ENCODE measurements at regions of chr2 and their contacts with region 1.

Region 1: DNA sequence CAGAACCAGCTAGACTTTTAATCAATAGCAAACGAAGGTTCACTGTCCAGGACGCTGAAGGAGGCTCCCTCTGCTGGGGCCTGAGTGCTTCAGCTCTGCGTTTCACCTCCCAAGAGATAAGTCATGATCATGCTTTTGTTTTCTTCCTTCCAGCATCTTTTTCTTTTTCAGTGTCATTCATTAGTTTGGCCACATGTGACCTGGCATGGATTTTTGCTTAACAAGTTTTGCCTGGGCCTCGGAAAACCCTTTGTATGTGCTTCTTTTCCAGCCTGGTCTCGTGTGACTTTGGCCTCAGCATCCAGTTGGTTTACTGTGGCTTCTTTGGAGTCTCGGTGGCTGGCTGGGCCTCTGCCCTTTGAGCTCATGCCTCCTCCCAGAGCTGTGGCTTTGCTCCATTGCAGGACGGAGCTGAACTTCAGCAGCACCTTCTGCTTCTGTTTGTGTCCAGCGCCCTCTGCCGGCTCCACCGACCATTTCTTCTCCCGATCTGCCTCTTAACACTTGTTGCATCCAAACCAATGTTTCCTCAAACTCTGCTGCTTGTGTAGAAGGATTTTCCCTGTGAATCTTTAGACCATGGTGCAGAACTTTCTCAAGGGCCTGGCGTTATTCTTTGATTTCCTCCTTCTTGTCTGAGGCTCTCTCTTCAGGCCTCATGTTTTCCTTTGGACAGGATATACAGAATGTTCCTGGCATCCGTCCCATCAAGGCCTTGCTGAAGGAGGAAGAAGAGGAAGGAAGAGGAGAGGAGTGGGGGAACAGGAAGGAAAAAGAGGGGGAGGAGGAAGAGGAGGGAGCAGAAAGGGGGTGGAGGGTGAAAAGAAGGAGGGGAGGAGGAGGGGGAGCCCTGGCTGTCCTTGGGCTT is 23.6 kb upstream of the HES6 start:
- DNase-seq: peak; percentile 73 to 87
- ATAC-seq: peak; percentile 62 to 77
- H3K4me3 ChIP-seq: no peak overlapping the region
- H3K27ac ChIP-seq: peak overlapping the region; percentile 13 to 67; a peak in 2 of 6 replicates
- H3K4me1 ChIP-seq: peaks cover 24% of the 10 kb centered on the region
- CTCF ChIP-seq: peak; percentile 74
- EP300 ChIP-seq: no peak
- POLR2A ChIP-seq: no peak
- RAD21 ChIP-seq: peak; percentile 69 to 71

Region 2: DNA sequence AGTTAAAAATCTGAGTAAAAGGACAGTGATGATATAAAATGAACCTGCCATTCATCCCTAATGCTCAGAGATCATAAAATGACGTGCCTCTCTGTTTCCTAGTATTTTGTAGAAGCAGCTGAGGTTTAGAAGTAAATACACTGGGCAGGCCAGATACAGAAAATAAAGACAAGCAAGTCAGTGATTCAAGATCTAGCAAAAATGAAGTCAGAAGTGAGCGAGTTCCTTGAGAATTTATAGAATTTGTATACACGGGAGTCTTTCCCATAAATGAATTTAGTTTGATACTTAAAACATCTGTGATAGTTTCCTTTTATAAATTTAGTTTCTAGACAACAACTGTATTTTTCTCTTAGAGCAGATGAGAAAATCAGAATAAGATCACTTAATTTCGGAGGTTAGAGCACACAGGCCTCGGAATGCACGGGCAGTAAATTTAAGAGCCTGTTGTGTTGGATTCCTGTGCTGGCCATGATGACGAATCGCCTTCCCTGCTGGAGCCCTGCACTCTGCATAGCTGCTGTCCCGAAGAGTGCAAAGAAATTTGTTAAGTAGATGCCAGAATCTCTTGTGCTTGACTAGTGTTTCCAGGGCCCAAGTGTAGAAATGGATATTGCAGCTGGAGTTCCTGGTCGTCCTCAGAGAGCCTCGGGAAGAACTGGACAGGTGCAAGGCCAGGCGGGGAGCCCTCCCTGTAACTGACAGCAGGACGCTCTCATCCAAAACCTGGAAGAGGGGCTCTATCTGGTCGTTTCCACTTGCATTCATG is 548.6 kb before region 1 on chr2:
- CTCF ChIA-PET with region 1: no interaction called
- POLR2A ChIA-PET with region 1: no interaction called
- DNase-seq: no peak
- ATAC-seq: no peak
- H3K4me3 ChIP-seq: no peak overlapping the region
- H3K27ac ChIP-seq: no peak overlapping the region
- H3K4me1 ChIP-seq: peaks cover 10% of the 10 kb centered on the region; the same call in 1 of the 3 replicates
- CTCF ChIP-seq: no peak
- EP300 ChIP-seq: no peak
- POLR2A ChIP-seq: no peak
- RAD21 ChIP-seq: no peak

Region 3: DNA sequence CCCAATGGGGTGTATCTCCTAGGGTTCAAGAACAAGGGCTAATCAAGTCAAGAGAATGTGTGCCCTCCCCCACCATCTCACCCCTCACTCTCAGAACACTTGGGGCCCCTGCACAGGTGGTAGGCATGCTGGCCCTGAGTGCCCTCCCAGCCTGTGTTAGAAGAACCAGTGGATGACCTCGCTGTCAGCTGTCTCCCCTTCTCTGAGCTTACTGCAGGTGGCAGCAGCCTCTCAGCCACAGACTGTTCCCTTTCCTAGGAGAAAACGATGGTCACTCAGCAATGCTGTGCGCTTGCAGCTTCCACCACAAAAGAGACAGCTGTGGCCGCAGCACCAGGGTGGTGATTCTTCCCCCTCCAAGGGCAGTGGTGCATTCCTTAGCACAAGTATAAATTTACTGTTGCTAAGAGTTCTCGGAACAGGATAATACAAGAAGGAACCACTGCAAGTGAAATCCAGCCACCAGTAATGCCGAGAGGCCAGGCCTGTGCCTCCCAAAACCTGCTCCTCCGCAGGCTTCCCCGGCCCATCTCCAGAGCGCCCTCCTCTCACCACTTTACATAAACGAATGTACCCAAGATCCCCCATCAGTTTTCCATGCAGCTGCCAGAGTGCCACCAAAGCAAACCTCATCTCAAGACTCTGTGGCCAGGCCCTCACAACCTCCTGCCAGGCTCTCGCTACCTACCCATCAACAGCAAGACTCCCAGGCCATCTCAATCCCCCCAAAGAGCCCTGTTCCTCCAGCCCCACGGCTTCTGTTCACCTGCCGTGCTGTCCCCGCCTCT is 404.9 kb before region 1 on chr2:
- CTCF ChIA-PET with region 1: interaction called, 11 read pairs
- POLR2A ChIA-PET with region 1: no interaction called
- DNase-seq: peak; percentile 55 to 72
- ATAC-seq: peak; percentile 93 to 95
- H3K4me3 ChIP-seq: no peak overlapping the region
- H3K27ac ChIP-seq: no peak overlapping the region
- H3K4me1 ChIP-seq: peaks cover 28% of the 10 kb centered on the region
- CTCF ChIP-seq: peak; percentile 80
- EP300 ChIP-seq: no peak
- POLR2A ChIP-seq: no peak
- RAD21 ChIP-seq: peak; percentile 90 to 95

Region 4: DNA sequence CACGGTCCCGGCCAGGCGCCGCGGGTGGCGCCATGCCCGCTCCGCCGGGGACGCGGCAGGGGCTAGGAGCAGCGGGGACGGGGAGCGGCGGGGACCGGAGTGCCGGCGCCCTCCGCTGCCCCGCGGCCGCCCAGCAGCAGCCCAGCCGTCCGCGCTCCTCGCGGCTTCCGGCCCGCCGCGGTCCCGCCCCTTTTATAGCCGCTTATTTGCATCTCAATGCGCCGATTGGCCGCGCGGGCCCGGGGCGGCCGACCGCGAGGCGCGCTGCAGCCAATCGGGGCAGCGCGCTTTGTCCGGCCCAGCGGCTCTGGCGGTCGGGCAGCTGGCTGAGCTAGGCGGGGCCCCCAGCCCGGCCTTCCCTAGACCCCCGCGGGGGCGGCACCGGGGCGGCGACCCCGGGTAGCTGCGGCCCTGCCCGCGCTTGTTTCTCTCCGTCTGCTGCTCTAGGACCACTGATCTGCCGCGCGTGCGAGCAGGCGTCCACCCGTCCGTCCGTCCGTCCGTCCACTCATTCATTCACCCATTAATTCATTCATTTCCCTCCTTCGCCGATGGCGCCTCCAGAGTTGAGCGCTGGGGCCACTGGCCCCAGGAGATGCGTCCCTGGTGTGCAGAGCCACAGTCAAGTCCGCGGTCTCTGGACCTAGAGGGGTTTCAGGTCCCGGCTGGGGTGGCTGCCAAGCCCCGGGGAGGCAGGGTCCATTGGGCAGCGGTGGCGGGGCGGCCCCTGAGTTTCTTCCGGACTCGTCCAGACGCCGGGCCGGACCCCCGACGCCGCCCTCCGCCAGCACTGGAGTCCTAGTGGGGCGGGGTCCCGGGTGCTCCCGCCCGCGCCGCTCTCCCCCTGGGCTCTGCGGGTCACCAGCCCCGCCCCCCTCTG is 23.3 kb before region 1 on chr2 and contains the start of gene HES6:
- CTCF ChIA-PET with region 1: interaction called, 14 read pairs
- POLR2A ChIA-PET with region 1: interaction called, 5 read pairs
- DNase-seq: peak; percentile 83 to 88
- ATAC-seq: peak; percentile 80 to 90
- H3K4me3 ChIP-seq: peak within 1 kb of the TSS; percentile 81
- H3K27ac ChIP-seq: peak within 1 kb of the TSS; percentile 77 to 90
- H3K4me1 ChIP-seq: peaks cover 9% of the 10 kb centered on the region; the same call in 1 of the 3 replicates
- CTCF ChIP-seq: no peak
- EP300 ChIP-seq: no peak
- POLR2A ChIP-seq: peak; percentile 99
- RAD21 ChIP-seq: no peak
- polyA plus RNA-seq, gene HES6: 5.2 and 5.4 TPM in 2 replicates

Region 5: DNA sequence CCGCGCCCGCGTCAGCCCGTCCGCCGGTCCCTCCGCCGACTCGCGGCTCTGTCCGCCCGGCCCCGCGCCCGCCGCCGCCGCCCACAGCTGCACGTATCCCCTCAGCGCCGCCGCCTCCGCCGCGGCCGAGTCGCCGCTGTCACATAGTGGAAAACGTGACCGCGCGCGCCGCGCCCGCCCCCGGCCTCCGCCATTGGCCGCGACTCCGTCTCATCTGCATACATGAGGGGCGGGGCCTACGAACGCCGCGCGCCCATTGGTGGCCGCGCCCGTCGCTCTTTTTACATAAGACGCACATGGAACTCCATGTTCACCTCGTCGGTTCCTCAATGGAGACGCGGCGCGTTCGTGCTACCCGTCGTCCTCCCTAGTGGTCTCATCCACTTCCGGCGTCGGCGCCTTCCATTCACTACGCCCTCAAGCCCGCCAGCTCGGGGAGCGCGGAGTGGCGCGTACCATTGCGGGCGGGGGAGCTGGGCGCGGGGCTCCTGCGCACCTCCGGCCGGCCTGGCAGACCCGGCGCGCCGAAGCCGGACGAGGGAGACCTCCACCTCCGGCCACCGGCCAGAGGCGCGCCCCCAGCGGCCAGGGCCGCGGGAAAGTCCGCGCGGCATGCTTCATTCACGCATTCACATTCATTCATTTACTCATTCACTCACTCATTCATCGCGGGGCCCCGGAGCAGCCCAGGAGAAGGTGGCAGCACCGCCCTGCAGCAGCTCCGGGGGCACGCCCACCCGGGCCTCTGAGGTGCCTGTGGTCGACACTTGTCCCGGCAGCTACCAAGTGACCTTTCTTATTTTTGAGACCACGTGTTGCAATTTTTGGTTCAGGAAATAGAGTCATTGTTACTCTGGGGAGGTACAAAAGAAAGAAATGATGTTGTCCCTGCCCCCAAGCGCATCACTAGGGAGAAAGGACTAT is 25.5 kb after region 1 on chr2:
- CTCF ChIA-PET with region 1: interaction called, 351 read pairs
- POLR2A ChIA-PET with region 1: no interaction called
- DNase-seq: peak; percentile 76 to 99
- ATAC-seq: peak; percentile 58 to 62
- H3K4me3 ChIP-seq: peak overlapping the region; percentile 67
- H3K27ac ChIP-seq: peak overlapping the region; percentile 90 to 95
- H3K4me1 ChIP-seq: peaks cover 69% of the 10 kb centered on the region
- CTCF ChIP-seq: peak; percentile 37; the same call in 2 of the 3 replicates
- EP300 ChIP-seq: no peak
- POLR2A ChIP-seq: peak; percentile 58; the same call in 1 of the 2 replicates
- RAD21 ChIP-seq: no peak; a peak in 1 of 5 replicates

Region 6: GRCh38 chr2:238339395-238340213 is 76.2 kb after region 1 on chr2:
- CTCF ChIA-PET with region 1: interaction called, 27 read pairs
- POLR2A ChIA-PET with region 1: no interaction called
- DNase-seq: peak; percentile 29 to 49
- ATAC-seq: peak; percentile 86 to 87
- H3K4me3 ChIP-seq: no peak overlapping the region
- H3K27ac ChIP-seq: peak overlapping the region in 1 of 2 experiments; percentile 47; a peak in 3 of 6 replicates
- H3K4me1 ChIP-seq: peaks cover 6% of the 10 kb centered on the region; the same call in 2 of the 3 replicates
- CTCF ChIP-seq: peak; percentile 46; the same call in 1 of the 3 replicates
- EP300 ChIP-seq: no peak
- POLR2A ChIP-seq: no peak
- RAD21 ChIP-seq: peak; percentile 61 to 71

Region 7: GRCh38 chr2:238426568-238427434 is 163.4 kb after region 1 on chr2 and contains the start of gene ASB1:
- CTCF ChIA-PET with region 1: no interaction called
- POLR2A ChIA-PET with region 1: no interaction called
- DNase-seq: peak; percentile 62 to 76
- ATAC-seq: peak; percentile 85 to 88
- H3K4me3 ChIP-seq: peak within 1 kb of the TSS; percentile 85
- H3K27ac ChIP-seq: peak within 1 kb of the TSS; percentile 94 to 99
- H3K4me1 ChIP-seq: peaks cover 21% of the 10 kb centered on the region; the same call in 2 of the 3 replicates
- CTCF ChIP-seq: no peak
- EP300 ChIP-seq: no peak
- POLR2A ChIP-seq: peak; percentile 46
- RAD21 ChIP-seq: no peak
- polyA plus RNA-seq, gene ASB1: 40.1 and 42.7 TPM in 2 replicates

Region 8: GRCh38 chr2:238493880-238494572 is 230.6 kb after region 1 on chr2:
- CTCF ChIA-PET with region 1: no interaction called
- POLR2A ChIA-PET with region 1: no interaction called
- DNase-seq: no peak
- ATAC-seq: no peak
- H3K4me3 ChIP-seq: no peak overlapping the region
- H3K27ac ChIP-seq: no peak overlapping the region
- H3K4me1 ChIP-seq: no peaks in the 10 kb centered on the region
- CTCF ChIP-seq: no peak
- EP300 ChIP-seq: no peak
- POLR2A ChIP-seq: no peak
- RAD21 ChIP-seq: no peak

Measured in A549 (cell line).